ENCODE measurements at regions of chr2 and their contacts with region 1.

Region 1: GRCh38 chr2:55050133-55050994 is at the start of gene RTN4:
- DNase-seq: peak; percentile 97 to 99 (median 98)
- H3K4me3 ChIP-seq: peak within 1 kb of the TSS; percentile 94
- H3K4me3 Mint-ChIP-seq: peak within 1 kb of the TSS; percentile 97 to 100 (median 99)
- H3K27ac ChIP-seq: peak within 1 kb of the TSS; percentile 93
- H3K27ac Mint-ChIP-seq: peak within 1 kb of the TSS; percentile 91 to 100 (median 99)
- H3K4me1 ChIP-seq: peaks cover 56% of the 10 kb centered on the region
- H3K4me1 Mint-ChIP-seq: peaks cover 68 to 79% (median 79%) of the 10 kb centered on the region in 3 donors
- H3K27me3 ChIP-seq: no peaks in the 10 kb centered on the region
- H3K27me3 Mint-ChIP-seq: peaks cover 0 to 3% of the 10 kb centered on the region in 2 donors
- total RNA-seq, gene RTN4: 105 to 110 TPM

Region 2: GRCh38 chr2:55133467-55134315 is 83.3 kb after region 1 on chr2:
- CTCF ChIA-PET with region 1: interaction called, 10 read pairs
- POLR2A ChIA-PET with region 1: interaction called, 7 read pairs
- DNase-seq: peak; percentile 20 to 75 (median 70)
- H3K4me3 ChIP-seq: peak overlapping the region; percentile 60
- H3K4me3 Mint-ChIP-seq: peak overlapping the region; percentile 75 to 96 (median 90)
- H3K27ac ChIP-seq: peak overlapping the region; percentile 71
- H3K27ac Mint-ChIP-seq: peak overlapping the region; percentile 85 to 98 (median 96)
- H3K4me1 ChIP-seq: peaks cover 32% of the 10 kb centered on the region
- H3K4me1 Mint-ChIP-seq: peaks cover 27 to 31% (median 30%) of the 10 kb centered on the region in 3 donors
- H3K27me3 ChIP-seq: no peaks in the 10 kb centered on the region
- H3K27me3 Mint-ChIP-seq: no peaks in the 10 kb centered on the region

Region 3: DNA sequence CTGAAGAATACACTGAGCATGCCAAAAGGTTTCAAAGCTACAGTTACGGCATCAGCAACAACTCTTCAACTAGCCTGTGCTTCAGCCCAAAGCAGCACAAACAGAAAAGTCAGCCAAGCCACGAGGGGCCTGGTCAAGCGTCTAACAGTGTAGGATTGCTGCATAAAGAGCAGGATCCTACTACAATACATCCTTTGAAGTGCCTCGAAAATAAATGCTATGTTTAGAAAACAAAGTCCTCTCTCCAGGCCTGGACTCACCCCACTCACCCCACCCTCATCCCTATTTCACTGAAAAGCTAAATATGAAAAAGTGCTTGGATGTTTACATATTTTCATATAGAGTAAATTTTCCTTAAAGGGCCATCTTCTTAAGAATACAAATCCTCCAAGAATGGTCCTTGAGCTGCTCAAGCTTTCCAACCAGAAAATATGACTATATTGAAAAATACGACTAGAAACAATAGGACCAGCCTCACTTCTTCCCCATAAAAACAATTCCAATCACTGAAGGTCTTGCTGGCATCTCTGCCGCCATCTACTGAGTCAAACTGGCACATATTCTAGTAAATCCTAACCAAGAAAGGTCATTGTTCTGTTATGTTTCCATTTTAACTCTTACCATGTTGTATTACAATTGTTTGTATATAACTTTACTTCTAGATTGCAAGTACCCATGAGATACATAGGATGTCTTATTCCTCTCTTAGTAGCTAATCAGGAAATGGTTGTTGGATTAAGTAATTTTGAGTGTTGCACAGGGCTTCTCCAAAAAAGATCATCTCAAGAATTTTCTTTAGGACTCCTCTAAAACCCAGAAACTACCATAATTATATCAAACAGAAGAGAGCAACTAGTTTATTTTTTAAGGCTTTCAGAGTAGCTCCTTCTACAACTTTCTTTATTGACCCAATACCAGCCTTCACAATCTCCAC is 118.1 kb after region 1 on chr2:
- CTCF ChIA-PET with region 1: interaction called, 13 read pairs
- POLR2A ChIA-PET with region 1: interaction called, 3 read pairs
- DNase-seq: peak in 3 of 5 donors; percentile 6 to 44 (median 31)
- H3K4me3 ChIP-seq: no peak overlapping the region
- H3K4me3 Mint-ChIP-seq: no peak overlapping the region
- H3K27ac ChIP-seq: no peak overlapping the region
- H3K27ac Mint-ChIP-seq: no peak overlapping the region
- H3K4me1 ChIP-seq: no peaks in the 10 kb centered on the region
- H3K4me1 Mint-ChIP-seq: peaks cover 0 to 5% (median 0%) of the 10 kb centered on the region in 3 donors
- H3K27me3 ChIP-seq: no peaks in the 10 kb centered on the region
- H3K27me3 Mint-ChIP-seq: no peaks in the 10 kb centered on the region

Region 4: DNA sequence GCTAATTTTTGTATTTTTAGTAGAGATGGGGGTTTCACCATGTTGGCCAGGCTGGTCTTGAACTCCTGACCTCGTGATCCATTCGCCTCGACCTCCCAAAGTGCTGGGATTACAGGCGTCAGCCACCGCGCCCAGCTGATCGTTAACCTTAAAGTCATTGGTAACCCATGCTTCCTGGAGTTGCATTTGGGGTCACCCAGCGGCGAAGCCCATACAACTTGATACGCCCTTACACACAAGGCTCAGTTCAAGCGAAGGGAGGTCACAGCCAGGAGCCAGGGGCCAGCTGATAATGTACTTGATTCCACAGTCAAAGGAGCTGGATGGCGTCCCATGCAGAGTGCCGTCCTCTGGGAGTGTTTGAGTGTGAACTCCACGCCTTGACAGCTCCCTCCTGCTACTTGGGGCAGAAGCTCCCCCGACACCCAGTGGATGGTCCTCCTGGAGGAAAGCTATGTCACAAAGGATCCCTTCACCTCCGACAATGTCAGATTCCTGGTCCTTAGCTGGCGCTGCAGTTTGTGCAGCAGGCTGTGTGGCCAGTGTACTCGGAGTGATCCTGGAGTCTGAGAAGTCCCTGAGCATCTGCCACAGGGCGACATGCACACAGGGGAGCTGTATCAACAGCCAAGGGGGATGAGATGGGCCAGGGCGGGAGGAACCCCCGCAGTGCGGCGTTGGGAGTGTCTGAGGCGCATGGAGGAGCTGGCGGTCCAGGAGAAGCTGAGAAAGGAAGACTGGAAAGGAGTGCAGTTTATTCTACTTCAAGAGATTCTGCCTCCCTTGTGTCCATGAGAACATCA is 173.8 kb after region 1 on chr2:
- CTCF ChIA-PET with region 1: interaction called, 5 read pairs
- POLR2A ChIA-PET with region 1: interaction called, 10 read pairs
- DNase-seq: peak in 2 of 5 donors; percentile 3 to 50
- H3K4me3 ChIP-seq: no peak overlapping the region
- H3K4me3 Mint-ChIP-seq: peak overlapping the region; percentile 79 to 95 (median 84)
- H3K27ac ChIP-seq: no peak overlapping the region
- H3K27ac Mint-ChIP-seq: peak overlapping the region; percentile 42 to 95 (median 87)
- H3K4me1 ChIP-seq: peaks cover 28% of the 10 kb centered on the region
- H3K4me1 Mint-ChIP-seq: peaks cover 35 to 61% (median 49%) of the 10 kb centered on the region in 3 donors
- H3K27me3 ChIP-seq: no peaks in the 10 kb centered on the region
- H3K27me3 Mint-ChIP-seq: no peaks in the 10 kb centered on the region

Region 5: DNA sequence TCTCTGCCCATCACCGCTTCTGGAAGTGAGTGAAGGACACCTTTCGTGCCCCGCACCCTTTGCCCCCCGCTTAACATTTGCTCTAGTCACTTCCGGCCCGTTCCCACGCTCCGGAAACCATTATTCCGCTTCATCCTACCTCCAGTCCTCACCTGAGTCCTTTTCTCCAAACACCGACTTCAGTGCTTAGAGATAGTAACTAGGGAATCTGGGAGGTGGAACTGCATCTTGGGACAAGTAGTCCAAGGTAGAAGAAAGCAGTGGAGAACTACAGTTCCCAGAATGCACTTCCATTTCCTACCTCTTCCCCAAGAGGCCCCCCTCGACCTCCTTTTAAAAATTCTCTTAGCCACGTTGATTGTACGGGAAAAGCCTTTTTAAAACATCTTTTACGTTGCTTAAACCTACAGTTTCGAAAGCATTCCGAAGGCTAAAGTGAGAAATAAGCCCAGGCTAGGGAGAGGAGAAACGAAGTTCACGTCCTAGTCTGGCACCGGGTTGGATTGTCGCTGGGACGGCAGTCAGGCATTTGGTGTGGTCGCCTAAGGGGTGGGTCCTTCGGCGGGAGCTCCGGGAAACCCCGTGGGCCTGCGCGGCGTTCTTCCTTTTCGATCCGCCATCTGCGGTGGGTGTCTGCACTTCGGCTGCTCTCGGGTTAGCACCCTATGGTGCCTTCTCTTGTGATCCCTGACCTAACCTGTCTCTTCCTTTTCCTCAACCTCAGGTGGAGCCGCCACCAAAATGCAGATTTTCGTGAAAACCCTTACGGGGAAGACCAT is 181.9 kb after region 1 on chr2 and contains the starts of genes CLHC1 and RPS27A:
- CTCF ChIA-PET with region 1: no interaction called
- POLR2A ChIA-PET with region 1: interaction called, 11 read pairs
- DNase-seq: peak; percentile 90 to 95 (median 93)
- H3K4me3 ChIP-seq: peak within 1 kb of the TSS; percentile 99
- H3K4me3 Mint-ChIP-seq: peak within 1 kb of the TSS; percentile 99 to 100 (median 100)
- H3K27ac ChIP-seq: peak within 1 kb of the TSS; percentile 91
- H3K27ac Mint-ChIP-seq: peak within 1 kb of the TSS; percentile 97 to 99 (median 98)
- H3K4me1 ChIP-seq: peaks cover 49% of the 10 kb centered on the region
- H3K4me1 Mint-ChIP-seq: peaks cover 56 to 76% (median 71%) of the 10 kb centered on the region in 3 donors
- H3K27me3 ChIP-seq: no peaks in the 10 kb centered on the region
- H3K27me3 Mint-ChIP-seq: peaks cover 0 to 2% of the 10 kb centered on the region in 2 donors
- total RNA-seq, gene CLHC1: 8.4 to 9.8 TPM
- total RNA-seq, gene RPS27A: 1,155 to 1,172 TPM

Region 6: DNA sequence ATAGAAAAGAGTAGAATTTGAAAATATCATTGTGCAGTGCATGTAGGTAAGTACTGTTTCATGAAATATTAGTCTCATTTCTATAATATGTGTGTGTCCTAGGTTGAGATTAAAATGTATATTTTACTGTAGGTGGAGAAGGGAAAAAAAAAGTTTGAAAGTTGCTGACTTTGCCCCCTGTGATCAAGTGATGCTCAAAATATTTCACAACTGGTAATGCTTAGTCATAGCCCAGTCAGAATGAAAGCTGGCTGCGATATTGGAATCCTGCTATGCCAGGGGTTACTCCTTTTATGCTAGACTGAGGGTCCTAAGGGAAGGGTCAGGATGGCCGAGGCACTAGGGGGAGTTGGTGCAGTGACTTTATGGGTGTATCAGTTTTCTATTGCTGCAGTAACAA is 449.7 kb after region 1 on chr2:
- CTCF ChIA-PET with region 1: no interaction called
- POLR2A ChIA-PET with region 1: no interaction called
- DNase-seq: no peak
- H3K4me3 ChIP-seq: no peak overlapping the region
- H3K4me3 Mint-ChIP-seq: no peak overlapping the region
- H3K27ac ChIP-seq: no peak overlapping the region
- H3K27ac Mint-ChIP-seq: no peak overlapping the region
- H3K4me1 ChIP-seq: no peaks in the 10 kb centered on the region
- H3K4me1 Mint-ChIP-seq: no peaks in the 10 kb centered on the region
- H3K27me3 ChIP-seq: no peaks in the 10 kb centered on the region
- H3K27me3 Mint-ChIP-seq: peaks cover 0 to 5% of the 10 kb centered on the region in 2 donors